ENCODE measurements at regions of chr14 and their contacts with region 1.

Region 1: DNA sequence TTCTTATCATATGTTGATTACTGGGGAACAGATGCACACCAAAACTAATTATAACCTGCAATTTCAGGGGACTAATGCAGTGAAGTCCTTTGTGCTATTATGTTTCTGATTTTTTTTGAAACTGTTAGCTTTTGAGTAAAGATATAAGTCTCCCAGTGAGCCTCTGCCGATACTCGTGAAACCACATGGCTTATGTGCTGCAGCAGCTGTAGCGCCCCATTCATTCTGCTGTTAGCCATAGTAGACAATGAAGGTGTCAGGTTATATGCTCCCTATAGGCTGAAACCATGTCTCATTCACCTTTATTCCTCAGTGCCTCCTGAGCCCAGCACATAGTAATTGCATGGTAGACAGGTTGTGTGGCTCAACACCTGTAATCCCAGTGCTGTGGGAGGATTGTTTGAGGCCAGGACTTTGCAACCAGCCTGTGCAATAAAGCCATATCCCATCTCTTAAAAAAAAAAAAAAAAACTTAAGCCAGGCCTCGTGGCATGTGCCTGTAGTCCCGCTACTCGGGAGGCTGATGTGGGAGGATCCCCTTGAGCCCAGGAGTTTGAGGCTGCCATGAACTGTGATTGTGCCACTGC is 25.0 kb downstream of the GOLGA5 start:
- DNase-seq: no peak
- H3K4me3 ChIP-seq: no peak overlapping the region
- H3K27ac ChIP-seq: no peak overlapping the region
- H3K4me1 ChIP-seq: no peaks in the 10 kb centered on the region
- H3K27me3 ChIP-seq: no peaks in the 10 kb centered on the region
- CTCF ChIP-seq: no peak

Region 2: DNA sequence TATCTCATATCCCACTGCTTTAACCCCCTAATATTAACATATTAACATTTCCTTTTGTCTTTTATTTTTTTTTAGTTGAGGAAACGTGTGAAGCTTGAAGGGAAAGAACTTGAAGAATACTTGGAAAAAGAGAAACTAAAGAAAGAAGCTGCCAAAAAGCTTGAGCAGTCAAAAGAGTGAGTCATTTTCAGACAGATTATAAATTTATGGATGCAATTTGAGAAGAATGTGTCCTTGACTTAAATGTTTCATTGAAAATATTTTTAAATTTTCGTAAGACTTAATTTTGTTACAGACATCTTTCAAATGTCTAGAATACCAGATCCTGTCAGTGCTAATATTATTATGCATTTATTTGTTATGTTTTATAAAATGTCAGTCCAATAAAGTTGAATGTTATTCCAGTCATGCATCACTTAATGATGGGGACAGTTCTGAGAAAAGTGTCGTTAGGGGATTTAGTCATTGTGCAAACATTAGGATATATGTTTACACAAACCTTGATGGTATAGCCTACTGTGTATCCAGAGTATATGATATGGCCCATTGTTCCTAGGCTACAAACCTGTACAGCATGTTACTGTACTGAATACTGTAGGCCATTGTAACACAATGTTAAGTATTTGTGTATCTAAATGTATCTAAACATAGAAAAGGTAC is 664.7 kb before region 1 on chr14:
- CTCF ChIA-PET with region 1: interaction called, 13 read pairs
- dilution Hi-C with region 1: no loop called
- in situ Hi-C with region 1: no loop called
- intact Hi-C with region 1: no loop called
- DNase-seq: no peak
- H3K4me3 ChIP-seq: no peak overlapping the region
- H3K27ac ChIP-seq: no peak overlapping the region
- H3K4me1 ChIP-seq: no peaks in the 10 kb centered on the region
- H3K27me3 ChIP-seq: no peaks in the 10 kb centered on the region
- CTCF ChIP-seq: no peak

Measured in mammary epithelial cell (primary cell).